ENCODE measurements at regions of chr1 and their contacts with region 1.

Region 1: DNA sequence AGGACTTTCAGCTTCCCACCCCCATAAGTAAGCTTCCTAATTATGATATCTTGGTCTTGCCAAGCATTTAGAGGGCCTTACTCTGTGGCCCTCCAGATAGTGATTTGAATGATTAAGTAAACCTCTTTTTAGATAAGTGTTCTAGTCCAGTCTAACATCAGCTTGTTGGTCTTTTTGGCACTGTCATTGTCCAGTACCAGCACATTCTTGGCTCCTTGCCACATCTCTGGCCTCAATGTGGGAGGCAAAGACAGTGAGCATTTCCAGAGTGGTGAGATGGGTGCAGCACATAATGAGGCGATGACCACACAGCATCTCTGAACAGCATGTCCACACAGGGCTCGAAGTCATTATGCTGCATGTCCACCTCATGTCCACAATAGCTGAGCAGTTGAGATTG is 6.1 kb downstream of the CAPZA1 start:
- DNase-seq: peak in 1 of 2 donors; percentile 37
- ATAC-seq: peak in 6 of 8 donors; percentile 28 to 74 (median 55)
- H3K4me3 ChIP-seq: no peak overlapping the region
- H3K27ac ChIP-seq: peak overlapping the region in 1 of 10 donors; percentile 19
- H3K4me1 ChIP-seq: peaks cover 0 to 99% (median 70%) of the 10 kb centered on the region in 9 donors
- H3K27me3 ChIP-seq: no peaks in the 10 kb centered on the region
- CTCF ChIP-seq: no peak

Region 2: GRCh38 chr1:112643080-112643479 is 17.4 kb after region 1 on chr1:
- intact Hi-C with region 1: loop called in 1 of 10 experiments (anchors 2 kb)
- DNase-seq: no peak
- ATAC-seq: no peak
- H3K4me3 ChIP-seq: no peak overlapping the region
- H3K27ac ChIP-seq: no peak overlapping the region
- H3K4me1 ChIP-seq: peaks cover 0 to 33% (median under 1%) of the 10 kb centered on the region in 9 donors
- H3K27me3 ChIP-seq: no peaks in the 10 kb centered on the region
- CTCF ChIP-seq: no peak

Region 3: GRCh38 chr1:112674439-112674985 is 48.8 kb after region 1 on chr1 and contains the start of gene MOV10:
- intact Hi-C with region 1: loop called in 6 of 10 experiments (anchors 5 to 10 kb)
- DNase-seq: peak; percentile 73 to 76
- ATAC-seq: peak; percentile 73 to 84 (median 78)
- H3K4me3 ChIP-seq: peak within 1 kb of the TSS; percentile 67 to 92 (median 85)
- H3K27ac ChIP-seq: peak within 1 kb of the TSS; percentile 73 to 97 (median 93)
- H3K4me1 ChIP-seq: peaks cover 10 to 55% (median 30%) of the 10 kb centered on the region in 9 donors
- H3K27me3 ChIP-seq: no peaks in the 10 kb centered on the region
- CTCF ChIP-seq: no peak
- total RNA-seq, gene MOV10: 6.3 to 25.8 (median 13.9) TPM

Region 4: DNA sequence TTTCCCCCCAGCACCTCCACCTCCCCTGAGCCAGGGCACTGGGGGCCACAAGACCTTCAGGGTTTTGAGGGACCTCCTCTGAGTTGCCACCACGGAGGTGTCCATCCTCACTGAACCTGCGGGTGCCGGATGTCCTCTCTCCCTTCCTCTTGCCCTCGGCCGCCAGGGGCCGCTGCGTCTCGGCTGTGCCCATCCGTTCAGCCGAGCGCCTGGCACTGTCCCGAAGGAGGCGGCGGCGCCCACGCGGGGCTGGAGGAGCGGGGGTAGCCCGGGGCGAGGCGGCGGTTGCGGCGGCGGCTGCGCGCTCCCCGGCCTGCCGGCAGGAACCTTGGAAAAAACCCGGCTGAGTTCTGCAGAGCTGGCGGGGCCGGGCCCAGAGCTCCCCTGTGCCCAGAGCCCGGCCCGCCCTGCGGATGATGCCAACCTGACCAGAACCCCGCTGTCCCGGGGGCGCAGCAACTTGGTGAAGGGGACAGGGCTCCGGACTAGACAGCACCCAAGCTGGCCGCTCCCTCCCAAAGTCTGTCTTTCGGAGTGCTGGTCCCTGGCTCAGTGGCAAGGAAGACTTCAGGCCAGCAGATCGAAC is 93.1 kb after region 1 on chr1:
- intact Hi-C with region 1: no loop called
- DNase-seq: peak; percentile 78 to 82
- ATAC-seq: peak in 1 of 8 donors; percentile 19
- H3K4me3 ChIP-seq: peak overlapping the region in 8 of 10 donors; percentile 6 to 46 (median 32)
- H3K27ac ChIP-seq: no peak overlapping the region
- H3K4me1 ChIP-seq: peaks cover 2 to 42% (median 22%) of the 10 kb centered on the region in 9 donors
- H3K27me3 ChIP-seq: peaks cover 0 to 38% (median 12%) of the 10 kb centered on the region in 7 donors
- CTCF ChIP-seq: peak; percentile 45 to 92 (median 83)

Region 5: DNA sequence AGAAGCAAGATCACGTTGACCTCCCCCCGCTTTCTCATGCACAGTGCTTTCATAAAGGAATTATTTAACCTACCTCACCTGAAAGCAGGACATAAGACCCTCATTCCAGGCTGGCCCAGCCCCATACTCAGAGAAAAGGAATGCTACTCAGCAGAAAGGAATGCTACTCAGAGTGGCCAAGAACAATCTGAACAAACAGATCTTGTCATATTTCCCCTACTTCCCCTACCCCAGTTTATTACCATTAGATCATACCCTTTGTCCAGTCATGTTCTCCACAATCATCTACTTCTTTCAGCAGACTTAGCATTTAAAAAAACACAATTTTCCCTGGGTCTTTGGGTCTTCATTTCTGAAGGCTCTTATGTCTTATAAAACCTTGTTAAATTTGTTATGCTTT is 240.5 kb after region 1 on chr1:
- intact Hi-C with region 1: no loop called
- DNase-seq: no peak
- ATAC-seq: no peak
- H3K4me3 ChIP-seq: no peak overlapping the region
- H3K27ac ChIP-seq: no peak overlapping the region
- H3K4me1 ChIP-seq: no peaks in the 10 kb centered on the region
- H3K27me3 ChIP-seq: no peaks in the 10 kb centered on the region
- CTCF ChIP-seq: no peak

Region 6: GRCh38 chr1:113178522-113178921 is 552.8 kb after region 1 on chr1:
- intact Hi-C with region 1: no loop called
- DNase-seq: no peak
- ATAC-seq: no peak
- H3K4me3 ChIP-seq: no peak overlapping the region
- H3K27ac ChIP-seq: no peak overlapping the region
- H3K4me1 ChIP-seq: no peaks in the 10 kb centered on the region
- H3K27me3 ChIP-seq: no peaks in the 10 kb centered on the region
- CTCF ChIP-seq: peak in 1 of 9 donors; percentile 11

Measured in heart right ventricle (tissue), 16 donors.